Mammary epithelial cell (primary cell): ENCODE measurements at regions of chr2 and their contacts with region 1.

Region 1: GRCh38 chr2:157751462-157752058 is 122.9 kb upstream of the ACVR1C start:
- DNase-seq: peak; percentile 95
- H3K4me3 ChIP-seq: no peak overlapping the region
- H3K27ac ChIP-seq: peak overlapping the region; percentile 58
- H3K4me1 ChIP-seq: peaks cover 16% of the 10 kb centered on the region
- H3K27me3 ChIP-seq: no peaks in the 10 kb centered on the region
- CTCF ChIP-seq: no peak

Region 2: DNA sequence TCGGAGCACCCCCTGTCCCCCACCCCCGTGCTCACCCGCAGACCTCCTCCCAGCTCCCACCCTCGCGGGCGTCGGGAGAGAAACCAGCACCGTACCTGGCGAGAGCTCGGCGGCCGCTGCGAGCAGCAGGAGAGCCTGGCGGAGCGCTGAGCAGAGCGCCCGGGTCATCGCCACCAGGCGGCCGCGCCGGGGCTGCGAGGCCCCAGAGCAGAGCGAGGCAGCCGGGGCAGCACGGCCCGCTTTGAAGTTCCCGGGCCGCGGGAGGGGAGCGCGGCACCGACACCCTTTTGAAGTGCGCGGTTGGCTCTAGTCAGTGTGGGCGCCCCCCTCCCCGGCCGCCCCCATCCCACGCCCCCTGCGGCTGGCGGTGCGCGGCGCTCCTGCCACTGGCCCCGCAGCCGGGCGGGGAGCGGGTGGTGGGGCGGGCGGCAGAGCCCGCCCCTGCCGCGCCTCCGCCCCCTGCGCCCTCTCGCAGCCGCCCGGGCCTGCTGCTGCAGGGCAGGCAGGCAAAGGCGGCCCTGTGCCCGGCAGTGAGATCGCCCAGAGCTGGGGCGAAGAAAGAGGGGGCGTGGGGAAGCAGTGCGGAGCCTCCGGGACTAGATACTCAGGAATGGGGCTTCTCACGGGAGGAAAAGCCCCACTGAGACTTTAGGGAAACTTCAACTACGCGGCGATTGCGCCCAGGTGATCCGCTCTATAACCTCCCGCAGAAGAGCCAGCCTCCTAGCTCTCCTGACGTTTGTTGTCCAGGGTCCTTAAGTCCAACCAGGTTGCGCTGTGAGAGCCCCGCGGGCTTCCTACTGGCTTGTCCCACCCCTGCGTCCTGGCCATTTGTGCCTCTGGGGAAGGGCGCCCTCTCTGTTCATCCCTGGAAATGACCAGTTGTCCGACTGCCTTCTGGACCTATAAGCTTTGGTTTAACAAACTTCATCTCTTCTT is 122.8 kb before region 1 on chr2 and contains the start of gene ACVR1C:
- CTCF ChIA-PET with region 1: interaction called, 5 read pairs
- dilution Hi-C with region 1: no loop called
- in situ Hi-C with region 1: no loop called
- intact Hi-C with region 1: loop called (anchors 10 kb)
- DNase-seq: peak; percentile 60
- H3K4me3 ChIP-seq: peak within 1 kb of the TSS; percentile 56 to 60 (median 59)
- H3K27ac ChIP-seq: no peak within 1 kb of the TSS
- H3K4me1 ChIP-seq: peaks cover 10% of the 10 kb centered on the region
- H3K27me3 ChIP-seq: peaks cover 2% of the 10 kb centered on the region
- CTCF ChIP-seq: peak; percentile 69
- total RNA-seq, gene ACVR1C: 0.21 to 0.83 TPM

Region 3: GRCh38 chr2:157911750-157912149 is 160.2 kb after region 1 on chr2:
- CTCF ChIA-PET with region 1: no interaction called
- dilution Hi-C with region 1: no loop called
- in situ Hi-C with region 1: no loop called
- intact Hi-C with region 1: no loop called
- DNase-seq: no peak
- H3K4me3 ChIP-seq: no peak overlapping the region
- H3K27ac ChIP-seq: no peak overlapping the region
- H3K4me1 ChIP-seq: no peaks in the 10 kb centered on the region
- H3K27me3 ChIP-seq: peaks cover 5% of the 10 kb centered on the region
- CTCF ChIP-seq: no peak